ENCODE measurements at regions of chr11 and their contacts with region 1.

Region 1: DNA sequence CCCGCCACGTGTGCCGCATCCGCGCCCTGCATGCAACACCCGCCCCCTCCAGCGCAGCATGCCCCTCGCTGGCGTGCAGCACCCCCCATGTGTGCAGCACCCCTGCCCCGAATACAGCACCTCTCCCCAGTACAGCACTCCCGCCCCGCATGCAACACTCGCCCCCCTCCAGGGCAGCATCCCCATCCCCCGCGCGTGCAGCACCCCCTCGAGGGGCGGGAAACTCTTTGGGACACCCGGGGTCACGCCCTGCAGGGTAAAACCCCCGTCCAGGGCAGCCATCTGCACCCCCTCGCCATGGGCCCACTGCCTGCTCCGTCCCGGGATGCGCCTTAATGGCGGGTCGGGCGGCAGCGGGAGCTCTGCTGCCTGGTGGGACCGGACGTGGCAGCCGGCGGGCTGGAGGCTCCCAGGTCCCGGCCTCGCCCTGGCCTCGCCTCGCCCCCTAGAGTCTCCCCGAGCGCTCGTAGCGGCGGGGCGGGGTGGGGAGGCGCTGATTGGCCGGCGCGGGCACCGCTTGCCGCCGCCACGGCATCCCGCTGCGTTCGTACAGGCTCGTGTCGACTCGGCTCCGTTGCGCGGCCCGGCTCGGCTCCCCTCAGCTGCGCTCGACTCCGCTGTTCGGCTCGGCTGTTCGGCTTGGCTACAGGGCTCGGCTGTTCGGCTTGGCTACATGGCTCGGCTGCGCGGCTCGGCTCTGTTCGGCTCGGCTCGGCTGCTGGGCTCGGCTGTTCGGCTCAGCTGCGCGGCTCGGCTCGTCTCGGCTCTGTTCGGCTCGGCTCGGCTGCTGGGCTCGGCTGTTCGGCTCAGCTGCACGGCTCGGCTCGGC is 417 bp upstream of the BRSK2 start:
- DNase-seq: peak; percentile 86
- ATAC-seq: peak; percentile 97
- H3K4me3 ChIP-seq: peak overlapping the region; percentile 6 to 57 (median 29); a peak in 4 of 6 replicates
- H3K27ac ChIP-seq: no peak overlapping the region
- H3K4me1 ChIP-seq: peaks cover 12% of the 10 kb centered on the region
- H3K27me3 ChIP-seq: peaks cover 6 to 44% of the 10 kb centered on the region in 2 experiments
- CTCF ChIP-seq: peak; percentile 57
- EP300 ChIP-seq: no peak
- POLR2A ChIP-seq: no peak
- RAD21 ChIP-seq: peak; percentile 43; the same call in 1 of the 2 replicates

Region 2: DNA sequence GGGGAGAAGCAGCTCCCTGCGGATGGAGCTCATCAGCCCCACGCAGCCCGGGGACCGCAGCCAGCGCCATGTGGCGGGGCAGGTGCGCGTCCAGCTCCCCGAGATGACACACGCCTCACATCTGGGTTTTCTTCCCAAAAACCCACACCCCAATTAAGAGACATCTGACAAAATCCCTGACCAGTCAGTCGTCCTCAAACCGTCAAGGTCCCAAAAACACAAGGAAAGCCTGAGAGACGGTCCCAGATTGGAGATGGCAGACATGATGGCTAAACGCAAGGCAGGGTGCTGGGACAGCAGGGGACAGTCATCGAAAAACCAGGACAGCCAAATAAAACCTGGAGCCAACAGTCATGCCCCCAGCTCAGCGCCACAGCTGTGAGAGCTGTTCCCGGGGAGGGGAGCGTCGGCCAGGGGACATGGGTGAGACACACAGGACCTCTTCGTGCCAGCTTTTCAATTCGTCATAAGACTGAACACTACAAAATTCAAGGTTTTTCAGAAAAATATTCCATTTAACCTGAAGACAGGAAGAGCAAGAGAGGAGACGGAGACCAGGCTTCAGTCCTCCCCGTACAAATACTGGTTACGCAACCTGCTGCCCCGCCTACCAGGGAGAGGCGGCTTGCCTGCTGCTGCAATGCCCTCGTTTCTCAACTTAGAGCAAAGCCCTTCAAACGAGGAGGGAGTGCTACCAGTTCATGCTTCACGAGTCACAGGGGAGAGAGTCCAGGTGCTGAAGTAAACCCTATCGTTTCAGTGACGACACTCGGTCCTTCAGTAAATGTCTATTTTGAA is 90.4 kb before region 1 on chr11:
- CTCF ChIA-PET with region 1: no interaction called
- POLR2A ChIA-PET with region 1: no interaction called
- in situ Hi-C with region 1: loop called (anchors 10 kb)
- intact Hi-C with region 1: loop called (anchors 10 kb)
- DNase-seq: peak; percentile 91
- ATAC-seq: peak; percentile 83
- H3K4me3 ChIP-seq: peak overlapping the region in 1 of 3 experiments; percentile 53; a peak in 1 of 6 replicates
- H3K27ac ChIP-seq: peak overlapping the region; percentile 43
- H3K4me1 ChIP-seq: peaks cover 65% of the 10 kb centered on the region
- H3K27me3 ChIP-seq: no peaks in the 10 kb centered on the region
- CTCF ChIP-seq: peak; percentile 25; the same call in 1 of the 2 replicates
- EP300 ChIP-seq: peak; percentile 59 to 69; a peak in 3 of 4 replicates
- POLR2A ChIP-seq: no peak
- RAD21 ChIP-seq: no peak

Region 3: GRCh38 chr11:1309498-1310317 is 79.6 kb before region 1 on chr11 and contains the start of gene TOLLIP:
- CTCF ChIA-PET with region 1: no interaction called
- POLR2A ChIA-PET with region 1: no interaction called
- in situ Hi-C with region 1: no loop called
- intact Hi-C with region 1: loop called (anchors 10 kb)
- DNase-seq: peak; percentile 82
- ATAC-seq: peak; percentile 75
- H3K4me3 ChIP-seq: peak within 1 kb of the TSS; percentile 42 to 94 (median 81); a peak in 5 of 6 replicates
- H3K27ac ChIP-seq: peak within 1 kb of the TSS; percentile 69
- H3K4me1 ChIP-seq: peaks cover 52% of the 10 kb centered on the region
- H3K27me3 ChIP-seq: no peaks in the 10 kb centered on the region
- CTCF ChIP-seq: peak; percentile 79
- EP300 ChIP-seq: no peak
- POLR2A ChIP-seq: peak in 1 of 2 experiments; percentile 59; a peak in 2 of 4 replicates
- RAD21 ChIP-seq: peak; percentile 38
- total RNA-seq, gene TOLLIP: 19.4 and 25.9 TPM in 2 replicates